ENCODE measurements at regions of chr1 and their contacts with region 1.

Region 1: GRCh38 chr1:244801246-244801645 is 34.2 kb upstream of the COX20 start:
- DNase-seq: peak; percentile 75
- ATAC-seq: peak; percentile 95
- H3K4me3 Mint-ChIP-seq: no peak overlapping the region
- H3K27ac Mint-ChIP-seq: no peak overlapping the region
- H3K4me1 Mint-ChIP-seq: peaks cover 4% of the 10 kb centered on the region
- H3K27me3 Mint-ChIP-seq: no peaks in the 10 kb centered on the region
- CTCF ChIP-seq: peak; percentile 78

Region 2: GRCh38 chr1:244461245-244462071 is 339.8 kb before region 1 on chr1 and contains the start of gene CATSPERE:
- CTCF ChIA-PET with region 1: no interaction called
- POLR2A ChIA-PET with region 1: no interaction called
- intact Hi-C with region 1: no loop called
- DNase-seq: peak; percentile 79
- ATAC-seq: peak; percentile 98
- H3K4me3 Mint-ChIP-seq: peak within 1 kb of the TSS; percentile 74
- H3K27ac Mint-ChIP-seq: peak within 1 kb of the TSS; percentile 95
- H3K4me1 Mint-ChIP-seq: peaks cover 15% of the 10 kb centered on the region
- H3K27me3 Mint-ChIP-seq: no peaks in the 10 kb centered on the region
- CTCF ChIP-seq: no peak
- total RNA-seq, gene CATSPERE: 0.20 to 0.58 TPM

Region 3: DNA sequence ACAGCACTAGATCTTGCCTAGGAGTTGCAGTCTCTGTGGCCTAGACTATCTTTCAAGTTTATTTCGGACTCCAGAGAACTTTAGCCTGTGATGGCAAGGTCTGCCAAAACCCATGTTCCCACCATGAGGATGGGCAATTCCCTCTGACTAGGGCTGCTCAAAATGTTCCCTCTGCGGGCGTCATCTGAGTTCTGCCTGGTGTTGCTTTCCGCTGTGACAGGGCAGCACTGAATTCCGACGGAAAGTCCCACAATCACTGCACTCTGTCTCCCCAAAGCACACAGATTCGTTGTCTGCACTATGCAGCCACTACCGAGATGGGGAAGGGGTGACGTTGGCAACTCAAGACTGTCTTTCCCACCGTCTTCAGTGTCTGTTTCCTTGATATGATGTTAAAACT is 264.9 kb before region 1 on chr1:
- CTCF ChIA-PET with region 1: no interaction called
- POLR2A ChIA-PET with region 1: no interaction called
- intact Hi-C with region 1: no loop called
- DNase-seq: no peak
- ATAC-seq: no peak
- H3K4me3 Mint-ChIP-seq: no peak overlapping the region
- H3K27ac Mint-ChIP-seq: no peak overlapping the region
- H3K4me1 Mint-ChIP-seq: no peaks in the 10 kb centered on the region
- H3K27me3 Mint-ChIP-seq: no peaks in the 10 kb centered on the region
- CTCF ChIP-seq: no peak

Region 4: DNA sequence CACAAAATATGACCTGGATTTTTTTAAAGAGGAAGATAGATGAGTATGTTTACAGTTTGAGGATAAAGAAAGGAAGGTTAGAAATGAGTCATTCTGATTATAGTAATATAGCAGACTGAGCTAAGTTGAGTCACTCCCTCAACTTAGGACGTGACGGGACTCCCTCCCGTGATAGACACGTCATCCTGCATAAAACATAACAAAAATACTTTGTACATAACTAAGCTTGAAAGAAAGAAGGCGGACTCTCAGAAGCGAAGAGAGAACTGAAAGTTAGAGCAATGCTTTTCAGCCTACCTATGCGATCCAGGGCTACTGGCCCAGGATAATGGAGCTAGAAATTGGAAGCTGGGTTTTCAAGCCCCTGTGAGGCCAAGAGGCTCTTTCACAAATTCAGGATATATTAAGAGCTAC is 201.3 kb before region 1 on chr1:
- CTCF ChIA-PET with region 1: interaction called, 100 read pairs
- POLR2A ChIA-PET with region 1: no interaction called
- intact Hi-C with region 1: loop called (anchors 1 kb)
- DNase-seq: peak; percentile 67
- ATAC-seq: peak; percentile 93
- H3K4me3 Mint-ChIP-seq: peak overlapping the region; percentile 47
- H3K27ac Mint-ChIP-seq: peak overlapping the region; percentile 86
- H3K4me1 Mint-ChIP-seq: peaks cover 18% of the 10 kb centered on the region
- H3K27me3 Mint-ChIP-seq: peaks cover 6% of the 10 kb centered on the region
- CTCF ChIP-seq: no peak

Region 5: DNA sequence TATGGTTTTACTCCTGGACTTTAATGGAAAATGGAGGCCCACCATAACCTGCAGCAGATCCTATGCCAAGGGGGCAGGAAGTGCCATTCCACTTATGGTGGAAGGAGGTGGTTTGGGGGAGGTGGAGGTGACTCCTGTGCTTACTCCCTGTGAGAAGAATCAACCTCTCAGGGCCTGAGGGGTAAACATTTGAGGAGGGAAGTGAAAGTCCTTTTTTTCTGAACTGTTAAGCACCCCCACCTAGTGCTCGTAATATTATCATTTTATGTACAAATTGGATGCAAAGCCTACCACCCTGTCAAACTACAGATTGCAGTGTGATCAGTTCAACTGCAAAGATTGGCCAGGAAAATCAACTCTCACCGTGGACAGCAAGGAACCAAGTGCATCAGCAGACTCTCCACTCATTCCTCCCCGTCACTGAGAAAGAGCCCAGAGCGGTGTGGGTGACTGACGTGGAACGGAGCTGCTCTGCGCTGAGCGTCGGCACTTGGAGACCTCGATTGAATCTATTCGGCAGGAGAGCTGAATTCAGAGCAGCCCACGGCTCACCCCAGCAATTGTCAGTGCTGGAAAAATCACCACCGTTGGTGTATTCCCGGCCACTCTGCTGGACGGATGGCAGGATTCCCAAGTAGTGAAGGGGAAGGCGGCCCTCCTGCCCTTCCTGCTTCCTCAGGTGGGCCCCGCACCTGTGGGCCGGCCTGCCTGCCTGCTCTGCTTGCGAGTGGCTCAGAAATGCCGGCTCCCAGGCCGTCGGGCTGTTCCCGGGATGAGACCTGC is 12.6 kb before region 1 on chr1:
- CTCF ChIA-PET with region 1: interaction called, 11 read pairs
- POLR2A ChIA-PET with region 1: no interaction called
- intact Hi-C with region 1: no loop called
- DNase-seq: no peak
- ATAC-seq: no peak
- H3K4me3 Mint-ChIP-seq: no peak overlapping the region
- H3K27ac Mint-ChIP-seq: no peak overlapping the region
- H3K4me1 Mint-ChIP-seq: no peaks in the 10 kb centered on the region
- H3K27me3 Mint-ChIP-seq: no peaks in the 10 kb centered on the region
- CTCF ChIP-seq: no peak

Region 6: GRCh38 chr1:244835276-244836134 is 34.3 kb after region 1 on chr1 and contains the start of gene COX20:
- CTCF ChIA-PET with region 1: interaction called, 10 read pairs
- POLR2A ChIA-PET with region 1: interaction called, 3 read pairs
- intact Hi-C with region 1: no loop called
- DNase-seq: peak; percentile 88
- ATAC-seq: peak; percentile 61
- H3K4me3 Mint-ChIP-seq: peak within 1 kb of the TSS; percentile 93
- H3K27ac Mint-ChIP-seq: peak within 1 kb of the TSS; percentile 98
- H3K4me1 Mint-ChIP-seq: peaks cover 38% of the 10 kb centered on the region
- H3K27me3 Mint-ChIP-seq: no peaks in the 10 kb centered on the region
- CTCF ChIP-seq: no peak
- total RNA-seq, gene COX20: 33.1 to 34.7 TPM

Region 7: GRCh38 chr1:244849189-244849866 is 48.1 kb after region 1 on chr1:
- CTCF ChIA-PET with region 1: interaction called, 14 read pairs
- POLR2A ChIA-PET with region 1: no interaction called
- intact Hi-C with region 1: no loop called
- DNase-seq: no peak
- ATAC-seq: no peak
- H3K4me3 Mint-ChIP-seq: no peak overlapping the region
- H3K27ac Mint-ChIP-seq: peak overlapping the region; percentile 46
- H3K4me1 Mint-ChIP-seq: peaks cover 75% of the 10 kb centered on the region
- H3K27me3 Mint-ChIP-seq: no peaks in the 10 kb centered on the region
- CTCF ChIP-seq: no peak

Region 8: GRCh38 chr1:245036102-245036501 is 234.9 kb after region 1 on chr1:
- CTCF ChIA-PET with region 1: interaction called, 78 read pairs
- POLR2A ChIA-PET with region 1: no interaction called
- intact Hi-C with region 1: no loop called
- DNase-seq: no peak
- ATAC-seq: no peak
- H3K4me3 Mint-ChIP-seq: no peak overlapping the region
- H3K27ac Mint-ChIP-seq: no peak overlapping the region
- H3K4me1 Mint-ChIP-seq: no peaks in the 10 kb centered on the region
- H3K27me3 Mint-ChIP-seq: no peaks in the 10 kb centered on the region
- CTCF ChIP-seq: no peak

Region 9: DNA sequence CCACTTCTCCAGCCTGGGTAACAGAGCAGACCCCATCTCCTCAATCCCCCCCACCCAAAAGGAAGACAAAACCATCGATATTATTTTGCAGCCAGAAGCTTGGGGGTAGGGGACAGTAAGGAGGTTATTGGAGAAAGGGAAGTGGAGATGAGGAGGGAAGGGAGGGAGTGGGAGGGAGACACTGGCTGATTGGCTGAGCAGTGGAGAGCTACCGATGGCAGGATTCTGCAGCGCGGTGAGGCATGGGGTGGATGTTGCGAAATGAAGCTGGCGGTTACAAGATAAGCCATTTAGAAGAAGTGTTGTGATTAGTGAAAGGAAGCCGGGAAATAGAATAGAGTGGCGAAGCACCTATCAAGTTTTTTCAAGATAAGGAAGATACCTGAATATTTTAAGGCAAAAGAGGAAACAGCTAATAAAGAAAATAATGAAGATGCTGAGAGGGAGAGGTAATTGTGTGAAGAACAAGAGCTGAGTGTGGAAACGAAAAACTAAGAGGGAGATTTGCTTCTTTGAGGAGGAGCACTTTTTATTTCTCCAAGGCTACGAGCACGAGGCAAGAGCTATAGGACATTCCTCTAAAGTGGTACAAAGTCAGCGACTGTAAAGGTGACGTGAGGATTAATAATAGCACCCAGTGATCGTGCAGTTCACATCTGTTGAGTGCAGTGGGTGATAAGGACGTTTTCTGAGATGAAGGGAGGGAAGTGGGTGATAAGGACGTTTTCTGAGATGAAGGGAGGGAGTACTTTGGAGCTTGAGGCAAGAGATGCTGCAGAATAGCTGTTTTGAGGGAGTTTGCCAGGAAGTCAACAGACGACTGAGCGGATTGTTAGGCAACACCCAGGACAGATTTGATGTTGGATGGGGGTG is 250.3 kb after region 1 on chr1:
- CTCF ChIA-PET with region 1: interaction called, 11 read pairs
- POLR2A ChIA-PET with region 1: no interaction called
- intact Hi-C with region 1: no loop called
- DNase-seq: peak; percentile 45
- ATAC-seq: peak; percentile 72
- H3K4me3 Mint-ChIP-seq: peak overlapping the region; percentile 36
- H3K27ac Mint-ChIP-seq: peak overlapping the region; percentile 17
- H3K4me1 Mint-ChIP-seq: peaks cover 12% of the 10 kb centered on the region
- H3K27me3 Mint-ChIP-seq: peaks cover 12% of the 10 kb centered on the region
- CTCF ChIP-seq: no peak

Measured in activated CD8-positive, alpha-beta T cell treated with anti-CD3 and anti-CD28 coated beads for 36 hours (primary cell).